Naive thymus-derived CD8-positive, alpha-beta T cell (primary cell): ENCODE measurements at regions of chr19 and their contacts with region 1.

Region 1: GRCh38 chr19:48965040-48965805 is at the start of gene FTL:
- DNase-seq: peak; percentile 78 to 95 (median 87)
- ATAC-seq: peak; percentile 76 to 77
- H3K4me3 Mint-ChIP-seq: peak within 1 kb of the TSS; percentile 94 to 100 (median 99)
- H3K27ac Mint-ChIP-seq: peak within 1 kb of the TSS; percentile 96 to 99 (median 98)
- H3K4me1 Mint-ChIP-seq: peaks cover 32 to 69% (median 65%) of the 10 kb centered on the region in 4 donors
- H3K27me3 Mint-ChIP-seq: no peaks in the 10 kb centered on the region
- polyA plus RNA-seq, gene FTL: 4,833 to 4,899 (median 4,886) TPM

Region 2: DNA sequence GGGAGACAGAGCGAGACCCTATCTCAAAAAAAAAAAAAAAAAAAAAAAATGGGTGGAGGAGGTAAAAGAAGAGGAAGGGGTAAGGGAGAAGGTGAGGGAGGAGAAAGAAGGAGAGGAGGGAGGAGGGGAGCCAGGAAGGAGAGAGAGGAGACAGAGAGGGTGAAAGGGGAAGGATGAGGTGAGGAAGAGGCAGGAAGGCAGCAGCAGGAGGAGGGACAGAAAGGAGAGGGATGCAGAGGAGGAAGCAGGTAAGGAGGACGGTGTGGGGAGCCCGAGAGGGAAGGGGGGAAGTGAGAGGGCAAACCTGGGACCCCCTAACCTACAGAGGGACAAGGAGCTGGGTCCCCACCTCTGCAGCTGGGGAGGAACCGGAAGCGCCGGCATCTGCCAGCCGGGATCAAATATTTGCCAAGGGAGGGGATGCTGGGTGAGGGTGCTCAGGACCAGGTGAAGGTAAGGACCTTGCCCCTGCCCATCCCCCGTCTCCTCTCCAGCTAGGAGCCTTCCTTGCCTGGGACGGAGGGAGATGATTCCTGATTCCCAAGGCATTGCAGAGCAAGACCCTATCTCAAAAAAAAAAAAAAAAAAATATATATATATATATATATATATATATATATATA is 363.0 kb before region 1 on chr19:
- POLR2A ChIA-PET with region 1: no interaction called
- DNase-seq: no peak
- ATAC-seq: no peak
- H3K4me3 Mint-ChIP-seq: no peak overlapping the region
- H3K27ac Mint-ChIP-seq: no peak overlapping the region
- H3K4me1 Mint-ChIP-seq: peaks cover 0 to 6% (median 0%) of the 10 kb centered on the region in 4 donors
- H3K27me3 Mint-ChIP-seq: peaks cover 0 to 3% (median 0%) of the 10 kb centered on the region in 5 donors

Region 3: GRCh38 chr19:48746738-48747575 is 218.3 kb before region 1 on chr19 and contains the start of gene IZUMO1:
- POLR2A ChIA-PET with region 1: no interaction called
- DNase-seq: peak in 7 of 10 donors; percentile 15 to 55 (median 48)
- ATAC-seq: peak; percentile 73 to 80
- H3K4me3 Mint-ChIP-seq: peak within 1 kb of the TSS in 5 of 10 donors; percentile 9 to 29 (median 14)
- H3K27ac Mint-ChIP-seq: peak within 1 kb of the TSS in 1 of 10 donors; percentile 21
- H3K4me1 Mint-ChIP-seq: peaks cover 6 to 18% (median 9%) of the 10 kb centered on the region in 4 donors
- H3K27me3 Mint-ChIP-seq: peaks cover 7 to 32% (median 17%) of the 10 kb centered on the region in 5 donors
- polyA plus RNA-seq, gene IZUMO1: not detected

Region 4: DNA sequence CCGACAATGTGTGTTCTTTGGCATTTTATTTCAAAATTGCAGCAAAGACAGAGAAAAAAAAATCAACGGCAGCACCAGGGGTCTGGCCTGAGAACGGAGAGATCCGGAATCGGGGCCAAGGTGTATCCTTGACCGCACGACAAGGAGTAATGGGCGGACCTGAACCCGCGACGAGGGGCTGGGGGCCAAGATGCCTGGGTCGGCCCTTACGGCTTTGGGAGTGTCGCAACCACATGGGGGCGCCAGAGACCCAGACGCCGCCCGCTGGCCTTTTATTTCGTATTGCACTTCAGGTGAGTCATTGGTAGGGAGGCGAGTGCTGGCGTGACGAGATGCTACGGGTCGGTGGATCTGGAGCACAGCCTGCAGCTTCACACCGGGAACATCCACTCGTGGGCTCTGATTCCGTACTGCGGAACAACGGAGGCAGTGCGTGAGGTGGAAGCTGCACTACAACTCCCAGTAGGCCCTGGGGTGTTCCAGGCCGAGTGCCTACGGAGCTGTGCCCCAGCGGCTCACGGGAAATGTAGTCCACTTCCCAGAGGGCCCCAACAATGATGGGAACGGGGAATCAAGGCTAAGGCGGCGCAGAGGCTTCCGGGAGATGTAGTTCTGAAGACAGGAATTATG is 170.1 kb before region 1 on chr19:
- POLR2A ChIA-PET with region 1: interaction called, 12 read pairs
- DNase-seq: peak; percentile 76 to 91 (median 78)
- ATAC-seq: peak; percentile 98
- H3K4me3 Mint-ChIP-seq: peak overlapping the region; percentile 83 to 98 (median 95)
- H3K27ac Mint-ChIP-seq: peak overlapping the region; percentile 61 to 97 (median 93)
- H3K4me1 Mint-ChIP-seq: peaks cover 6 to 14% (median 7%) of the 10 kb centered on the region in 4 donors
- H3K27me3 Mint-ChIP-seq: no peaks in the 10 kb centered on the region

Region 5: DNA sequence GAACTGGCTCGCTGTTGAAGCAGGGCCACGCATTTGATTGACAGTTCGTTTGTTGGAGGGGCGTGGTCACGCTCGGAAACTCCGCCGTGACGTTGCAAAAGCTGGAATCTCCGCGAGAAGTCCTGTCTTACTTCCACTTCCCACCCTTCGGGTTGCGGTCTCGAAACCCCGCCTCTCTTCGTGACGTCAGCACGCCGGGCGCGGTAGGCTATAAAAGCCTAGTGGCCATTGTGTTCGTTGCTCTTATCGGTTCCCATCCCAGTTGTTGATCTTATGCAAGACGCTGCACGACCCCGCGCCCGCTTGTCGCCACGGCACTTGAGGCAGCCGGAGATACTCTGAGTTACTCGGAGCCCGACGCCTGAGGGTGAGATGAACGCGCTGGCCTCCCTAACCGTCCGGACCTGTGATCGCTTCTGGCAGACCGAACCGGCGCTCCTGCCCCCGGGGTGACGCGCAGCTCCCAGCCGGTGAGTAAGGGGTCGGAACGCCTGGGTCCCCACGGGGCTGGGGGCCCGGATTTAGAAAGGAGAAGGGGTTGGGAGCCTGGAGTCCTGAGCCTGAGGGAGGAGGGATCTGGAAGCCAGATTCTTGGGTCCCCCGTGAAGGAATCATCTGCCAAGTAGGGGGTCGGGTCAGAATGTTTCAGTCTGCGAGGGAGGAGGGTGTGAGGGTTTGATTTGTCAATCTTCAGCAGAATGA is 92.9 kb before region 1 on chr19 and contains the start of gene PPP1R15A:
- POLR2A ChIA-PET with region 1: interaction called, 28 read pairs
- DNase-seq: peak; percentile 88 to 100 (median 98)
- ATAC-seq: peak; percentile 35 to 42
- H3K4me3 Mint-ChIP-seq: peak within 1 kb of the TSS; percentile 95 to 100 (median 98)
- H3K27ac Mint-ChIP-seq: peak within 1 kb of the TSS; percentile 94 to 100 (median 100)
- H3K4me1 Mint-ChIP-seq: peaks cover 29 to 45% (median 41%) of the 10 kb centered on the region in 4 donors
- H3K27me3 Mint-ChIP-seq: peaks cover 0 to 5% (median 0%) of the 10 kb centered on the region in 5 donors
- polyA plus RNA-seq, gene PPP1R15A: 17.2 to 47.3 (median 43.1) TPM

Region 6: GRCh38 chr19:48899781-48900476 is 65.3 kb before region 1 on chr19 and contains the start of gene NUCB1:
- POLR2A ChIA-PET with region 1: interaction called, 28 read pairs
- DNase-seq: peak; percentile 94 to 99 (median 98)
- ATAC-seq: peak; percentile 92 to 94
- H3K4me3 Mint-ChIP-seq: peak within 1 kb of the TSS; percentile 92 to 99 (median 97)
- H3K27ac Mint-ChIP-seq: peak within 1 kb of the TSS; percentile 89 to 98 (median 96)
- H3K4me1 Mint-ChIP-seq: peaks cover 13 to 49% (median 42%) of the 10 kb centered on the region in 4 donors
- H3K27me3 Mint-ChIP-seq: peaks cover 0 to 6% (median 3%) of the 10 kb centered on the region in 5 donors
- polyA plus RNA-seq, gene NUCB1: 48.6 to 119 (median 82.5) TPM

Region 7: GRCh38 chr19:48954595-48955310 is 10.5 kb before region 1 on chr19 and contains the start of gene BAX:
- POLR2A ChIA-PET with region 1: interaction called, 51 read pairs
- DNase-seq: peak; percentile 65 to 91 (median 76)
- ATAC-seq: peak; percentile 90 to 92
- H3K4me3 Mint-ChIP-seq: peak within 1 kb of the TSS; percentile 84 to 95 (median 90)
- H3K27ac Mint-ChIP-seq: peak within 1 kb of the TSS; percentile 84 to 97 (median 92)
- H3K4me1 Mint-ChIP-seq: peaks cover 12 to 38% (median 28%) of the 10 kb centered on the region in 4 donors
- H3K27me3 Mint-ChIP-seq: no peaks in the 10 kb centered on the region
- polyA plus RNA-seq, gene BAX: 58.5 to 97.1 (median 83.1) TPM

Region 8: GRCh38 chr19:48975947-48976847 is 11.0 kb after region 1 on chr19:
- POLR2A ChIA-PET with region 1: interaction called, 29 read pairs
- DNase-seq: peak in 5 of 10 donors; percentile 29 to 60 (median 46)
- ATAC-seq: peak; percentile 80 to 90
- H3K4me3 Mint-ChIP-seq: no peak overlapping the region
- H3K27ac Mint-ChIP-seq: peak overlapping the region in 1 of 10 donors; percentile 61
- H3K4me1 Mint-ChIP-seq: peaks cover 0 to 3% (median 1%) of the 10 kb centered on the region in 4 donors
- H3K27me3 Mint-ChIP-seq: no peaks in the 10 kb centered on the region

Region 9: DNA sequence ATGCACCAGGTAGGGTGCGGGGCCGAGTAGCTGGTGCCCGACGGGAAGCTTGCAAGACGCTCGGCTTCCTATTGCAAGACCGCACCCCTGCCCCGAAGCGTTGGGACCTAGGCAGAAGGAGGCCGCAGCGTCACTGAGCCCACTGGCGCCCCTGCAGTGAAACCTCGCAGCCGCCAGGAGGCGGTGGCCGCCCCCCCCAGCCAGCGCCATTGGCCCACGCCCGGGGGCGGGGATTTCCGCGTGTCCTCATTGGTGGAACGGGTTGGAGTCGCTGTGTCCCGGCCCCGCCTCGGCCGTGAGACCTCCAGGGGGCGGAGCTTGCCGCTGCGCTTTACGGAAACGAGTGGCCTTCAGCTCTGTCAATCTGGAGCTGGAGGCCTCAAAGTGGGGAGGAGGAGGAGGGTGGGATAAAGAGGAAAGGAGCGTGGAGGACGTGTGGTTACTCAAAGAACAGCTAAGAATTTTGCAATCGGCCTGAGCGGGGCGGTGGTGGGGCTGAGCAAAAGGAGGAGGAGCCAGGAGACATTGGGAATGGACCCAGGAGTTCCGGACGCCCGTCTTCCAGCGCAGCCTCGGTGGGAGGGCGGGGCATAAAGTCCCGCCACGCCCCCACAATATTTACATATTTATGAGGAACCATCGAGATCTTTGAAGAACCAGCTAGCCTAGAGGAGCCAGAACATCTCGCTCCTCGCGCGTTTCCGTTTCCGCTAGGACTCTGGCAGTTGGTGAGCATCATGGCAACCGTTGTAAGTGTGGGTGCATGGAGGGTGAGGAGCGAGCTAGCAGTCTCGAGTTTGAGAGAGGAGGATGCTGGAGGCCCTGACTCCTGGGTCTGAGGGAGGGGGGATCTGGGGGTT is 28.2 kb after region 1 on chr19 and contains the starts of genes GYS1 and RUVBL2:
- POLR2A ChIA-PET with region 1: interaction called, 53 read pairs
- DNase-seq: peak; percentile 98 to 100 (median 99)
- ATAC-seq: peak; percentile 92
- H3K4me3 Mint-ChIP-seq: peak within 1 kb of the TSS; percentile 92 to 98 (median 94)
- H3K27ac Mint-ChIP-seq: peak within 1 kb of the TSS; percentile 90 to 99 (median 98)
- H3K4me1 Mint-ChIP-seq: peaks cover 33 to 63% (median 44%) of the 10 kb centered on the region in 4 donors
- H3K27me3 Mint-ChIP-seq: no peaks in the 10 kb centered on the region
- polyA plus RNA-seq, gene GYS1: 17.9 to 31.0 (median 22.3) TPM
- polyA plus RNA-seq, gene RUVBL2: 47.5 to 66.1 (median 62.0) TPM